Panc1 (cell line): ENCODE measurements at regions of chr3 and their contacts with region 1.

Region 1: DNA sequence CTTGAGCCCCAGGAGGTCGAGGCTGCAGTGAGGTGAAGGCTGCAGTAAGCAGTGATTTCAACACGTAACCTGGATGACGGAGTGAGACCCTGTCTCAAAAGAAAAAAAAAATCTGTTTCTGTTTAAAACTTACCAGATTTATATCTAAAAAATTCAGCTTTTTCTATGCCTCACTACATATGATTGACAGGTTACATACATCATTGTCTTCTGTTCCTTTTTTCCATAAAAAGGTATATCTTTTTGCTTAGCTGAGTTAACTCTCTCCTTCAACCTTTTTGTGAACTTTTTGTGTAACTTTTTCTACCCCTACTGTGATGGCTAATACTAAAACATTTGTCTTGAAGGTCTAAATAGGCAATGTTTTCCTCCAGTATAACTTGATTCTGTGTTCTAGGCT is 38.6 kb upstream of the SETD2 start:
- DNase-seq: no peak
- ATAC-seq: no peak
- H3K4me3 ChIP-seq: no peak overlapping the region
- H3K27ac ChIP-seq: no peak overlapping the region
- H3K4me1 ChIP-seq: no peaks in the 10 kb centered on the region
- H3K27me3 ChIP-seq: no peaks in the 10 kb centered on the region
- CTCF ChIP-seq: no peak

Region 2: DNA sequence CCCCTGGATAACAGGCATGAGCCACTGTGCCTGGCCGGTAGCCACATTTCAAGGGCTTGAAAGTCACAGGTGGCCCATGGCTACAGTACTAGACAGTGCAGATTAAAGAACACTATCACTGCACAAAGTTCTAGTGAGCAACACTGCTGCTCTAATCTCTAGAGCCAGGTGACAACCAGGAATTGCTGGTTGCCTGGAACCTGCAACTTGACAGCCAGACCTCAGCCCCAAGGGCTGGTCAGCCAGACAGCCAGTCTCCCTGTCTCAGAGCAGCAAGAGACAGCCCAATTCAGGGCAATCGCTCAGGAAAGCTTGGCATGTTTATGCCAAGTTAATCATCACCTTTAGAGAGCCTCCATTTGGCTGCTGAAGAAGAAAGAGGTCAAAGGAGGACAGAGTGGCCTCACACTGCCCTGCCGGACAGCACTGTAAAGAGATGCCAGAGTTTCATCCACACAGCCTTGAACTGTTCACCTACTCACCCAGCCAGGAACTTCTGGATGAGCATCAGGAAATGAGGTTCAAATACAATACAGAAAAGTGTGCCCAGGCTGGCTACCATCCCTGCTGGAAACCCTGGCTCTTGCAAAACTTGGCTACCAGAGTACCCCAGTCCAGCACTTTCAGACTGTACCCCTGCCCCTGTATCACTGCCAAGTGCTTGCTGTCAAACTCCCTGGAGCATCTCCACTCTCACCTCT is 232.0 kb before region 1 on chr3:
- CTCF ChIA-PET with region 1: no interaction called
- POLR2A ChIA-PET with region 1: no interaction called
- in situ Hi-C with region 1: no loop called
- intact Hi-C with region 1: no loop called
- DNase-seq: no peak
- ATAC-seq: no peak; the same call in 1 of the 2 replicates
- H3K4me3 ChIP-seq: no peak overlapping the region
- H3K27ac ChIP-seq: no peak overlapping the region
- H3K4me1 ChIP-seq: peaks cover 25% of the 10 kb centered on the region
- H3K27me3 ChIP-seq: no peaks in the 10 kb centered on the region
- CTCF ChIP-seq: no peak

Region 3: GRCh38 chr3:47296562-47297302 is 94.2 kb after region 1 on chr3:
- CTCF ChIA-PET with region 1: no interaction called
- POLR2A ChIA-PET with region 1: interaction called, 15 read pairs
- in situ Hi-C with region 1: no loop called
- intact Hi-C with region 1: no loop called
- DNase-seq: no peak
- ATAC-seq: no peak
- H3K4me3 ChIP-seq: no peak overlapping the region
- H3K27ac ChIP-seq: no peak overlapping the region
- H3K4me1 ChIP-seq: no peaks in the 10 kb centered on the region
- H3K27me3 ChIP-seq: no peaks in the 10 kb centered on the region
- CTCF ChIP-seq: no peak